PC-3 (cell line): ENCODE measurements at regions of chr2 and their contacts with region 1.

Region 1: DNA sequence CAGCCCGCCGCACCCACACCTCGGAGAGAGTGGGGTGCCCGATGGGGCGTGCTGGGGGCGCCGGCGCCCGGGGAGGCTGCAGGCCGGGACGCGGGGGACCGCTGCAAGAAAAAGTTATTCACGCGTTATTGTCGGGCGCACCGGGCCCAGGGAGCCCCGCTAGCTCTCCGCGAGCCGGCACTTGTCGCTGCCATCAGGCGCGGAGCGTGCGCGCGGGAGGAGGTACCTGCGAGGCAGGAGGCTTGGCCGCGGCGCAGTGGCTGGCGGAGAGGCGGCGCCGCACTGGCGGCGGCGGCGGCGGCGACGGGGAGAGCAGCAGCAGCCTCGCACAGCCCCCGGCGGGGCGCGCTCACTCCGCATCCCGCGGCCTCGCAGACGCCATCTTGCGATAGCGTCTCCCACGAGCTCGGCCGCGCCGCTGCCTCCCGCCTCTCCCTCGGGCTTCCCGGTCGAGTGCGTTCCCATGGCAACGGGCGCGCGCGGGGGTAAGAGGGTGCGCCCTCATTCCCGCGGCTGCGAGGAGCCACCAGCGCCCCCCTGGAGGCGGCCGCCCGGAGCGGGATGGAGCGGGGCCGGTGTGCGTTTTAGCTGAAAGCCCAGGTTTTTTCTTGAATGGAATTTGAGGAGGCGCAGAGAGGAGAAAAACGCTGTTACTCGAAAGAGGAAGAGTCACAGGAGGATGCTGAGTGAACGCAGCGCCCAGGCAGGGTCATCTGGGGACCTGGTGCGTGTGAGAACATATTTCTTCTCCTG is at the start of gene CHN1:
- DNase-seq: peak; percentile 61
- ATAC-seq: peak; percentile 70
- H3K4me3 ChIP-seq: peak within 1 kb of the TSS; percentile 73
- H3K27ac ChIP-seq: no peak within 1 kb of the TSS
- H3K4me1 ChIP-seq: peaks cover 3% of the 10 kb centered on the region; the same call in 1 of the 2 replicates
- H3K27me3 ChIP-seq: peaks cover 25% of the 10 kb centered on the region
- CTCF ChIP-seq: peak; percentile 38; the same call in 1 of the 2 replicates
- total RNA-seq, gene CHN1: 7.8 and 9.2 TPM in 2 replicates

Region 2: GRCh38 chr2:174815526-174815925 is 189.6 kb before region 1 on chr2:
- CTCF ChIA-PET with region 1: no interaction called
- POLR2A ChIA-PET with region 1: no interaction called
- intact Hi-C with region 1: no loop called
- DNase-seq: no peak
- ATAC-seq: no peak
- H3K4me3 ChIP-seq: no peak overlapping the region
- H3K27ac ChIP-seq: no peak overlapping the region
- H3K4me1 ChIP-seq: peaks cover 5% of the 10 kb centered on the region; the same call in 1 of the 2 replicates
- H3K27me3 ChIP-seq: no peaks in the 10 kb centered on the region
- CTCF ChIP-seq: no peak

Region 3: DNA sequence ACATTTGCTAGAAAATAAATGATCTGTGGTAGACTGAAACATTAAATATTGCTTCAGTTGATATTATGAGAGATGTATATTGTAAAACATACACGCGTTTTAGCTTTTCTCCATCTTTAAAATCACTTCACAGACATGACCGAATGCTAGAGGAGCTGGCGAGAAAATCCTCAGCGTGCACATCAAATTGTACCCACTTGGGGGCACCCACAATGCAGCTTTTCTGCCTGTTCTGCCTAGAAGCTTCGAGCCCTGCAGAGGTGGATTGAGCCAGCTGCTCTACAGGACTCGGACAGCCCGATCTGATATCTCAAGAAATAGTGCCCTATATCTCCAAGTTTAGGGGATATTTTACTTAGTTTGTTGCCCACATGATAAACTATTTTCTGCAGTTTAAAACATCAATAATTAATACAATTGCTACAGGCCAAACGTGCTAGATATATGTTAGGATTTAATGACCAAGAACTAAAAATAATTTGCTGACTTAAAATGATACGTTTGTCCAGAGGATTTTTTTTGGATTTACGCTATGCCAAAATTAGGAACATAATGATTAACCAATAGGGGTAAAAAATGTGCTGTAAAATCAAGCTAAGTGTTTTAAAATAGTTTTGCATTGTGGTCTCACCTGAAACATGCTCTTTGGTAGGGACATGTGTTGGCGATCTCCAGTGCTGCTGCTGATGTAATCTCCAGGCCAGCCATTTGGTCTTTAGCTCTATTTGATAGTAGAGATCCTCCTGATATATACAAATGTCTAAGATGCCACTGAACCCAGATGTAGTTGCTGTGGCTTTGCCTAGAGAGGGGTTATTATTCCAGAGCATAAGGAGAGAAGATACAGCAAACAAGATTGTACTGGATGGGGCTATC is 198.7 kb after region 1 on chr2:
- CTCF ChIA-PET with region 1: no interaction called
- POLR2A ChIA-PET with region 1: interaction called, 16 read pairs
- intact Hi-C with region 1: no loop called
- DNase-seq: peak; percentile 72
- ATAC-seq: peak; percentile 99
- H3K4me3 ChIP-seq: peak overlapping the region; percentile 13; the same call in 1 of the 2 replicates
- H3K27ac ChIP-seq: no peak overlapping the region
- H3K4me1 ChIP-seq: no peaks in the 10 kb centered on the region
- H3K27me3 ChIP-seq: 0 out of 2 replicates have a peak, but pooled peaks cover 3% of the 10 kb centered on the region
- CTCF ChIP-seq: peak; percentile 80